Aorta (tissue), 5 donors: ENCODE measurements at regions of chr18 and their contacts with region 1.

Region 1: GRCh38 chr18:37537868-37538525 is 27.6 kb downstream of the CELF4 start:
- DNase-seq: peak; percentile 74 to 92
- ATAC-seq: peak; percentile 81
- H3K4me3 ChIP-seq: no peak overlapping the region
- H3K27ac ChIP-seq: no peak overlapping the region
- H3K4me1 ChIP-seq: no peaks in the 10 kb centered on the region
- H3K27me3 ChIP-seq: no peaks in the 10 kb centered on the region

Region 2: DNA sequence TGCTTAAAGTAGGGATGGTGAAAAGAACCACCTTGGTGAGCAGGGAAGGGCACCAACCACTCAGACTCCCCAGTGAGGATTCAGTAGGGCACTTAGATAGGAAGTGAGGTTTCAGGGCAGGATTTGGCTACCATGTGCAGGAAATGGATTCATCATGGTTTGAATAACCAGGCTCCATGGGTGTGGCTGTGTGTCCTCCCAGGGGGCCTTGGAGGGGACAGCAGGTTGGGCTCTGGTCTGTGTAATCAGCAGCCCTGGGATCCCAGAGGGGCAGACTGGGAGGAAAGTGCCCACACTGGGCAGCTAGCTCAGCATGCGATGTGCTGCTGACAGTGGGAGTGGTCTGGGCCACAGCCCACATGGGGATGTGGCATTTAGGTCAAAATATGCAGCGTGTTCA is 197.0 kb before region 1 on chr18:
- intact Hi-C with region 1: loop called (anchors 5 kb)
- DNase-seq: no peak
- ATAC-seq: no peak
- H3K4me3 ChIP-seq: no peak overlapping the region
- H3K27ac ChIP-seq: no peak overlapping the region
- H3K4me1 ChIP-seq: no peaks in the 10 kb centered on the region
- H3K27me3 ChIP-seq: no peaks in the 10 kb centered on the region

Region 3: DNA sequence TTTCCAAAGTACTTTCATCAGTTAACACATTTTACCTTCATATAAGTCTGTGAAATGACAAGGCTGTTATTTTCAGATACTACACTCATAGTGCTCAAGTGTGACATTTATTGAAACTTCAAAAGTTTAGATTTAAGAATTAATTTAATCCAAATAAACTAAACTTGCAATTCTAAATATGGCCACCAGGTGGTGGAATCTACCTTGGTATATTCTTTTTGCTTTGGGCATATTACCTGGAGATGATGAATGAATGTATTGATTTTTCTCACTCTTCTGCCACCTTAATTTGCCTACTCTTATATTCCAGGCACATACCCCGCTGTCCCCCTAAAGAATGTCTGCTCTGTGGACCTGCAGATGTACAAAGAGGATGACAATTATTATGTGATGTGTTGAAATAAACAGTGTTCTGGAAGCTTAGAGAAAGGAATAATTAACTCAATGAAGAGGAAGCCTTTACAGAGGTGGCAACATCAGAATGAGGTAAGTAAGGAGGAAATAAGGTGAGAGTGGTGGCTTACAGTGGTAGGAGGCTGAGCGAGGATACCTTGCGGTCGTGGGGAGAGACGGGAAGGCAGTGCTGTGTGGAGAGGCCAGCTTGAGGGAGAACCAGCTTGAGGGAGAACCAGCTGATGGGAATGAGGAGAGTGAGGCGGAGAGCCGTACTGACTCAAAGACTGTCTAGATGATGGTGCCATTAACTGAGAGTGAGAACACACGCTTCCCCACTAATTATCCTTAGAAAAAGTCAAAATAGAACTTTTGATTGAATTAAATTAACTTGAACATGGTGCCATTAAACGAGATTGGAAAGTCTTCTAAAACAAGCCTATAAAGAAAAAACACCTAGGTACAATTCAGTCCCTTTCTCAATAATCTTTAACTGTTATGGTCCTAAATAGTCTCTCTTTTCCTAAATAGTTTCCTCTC is 151.9 kb before region 1 on chr18:
- intact Hi-C with region 1: loop called (anchors 1 to 5 kb)
- DNase-seq: no peak
- ATAC-seq: no peak
- H3K4me3 ChIP-seq: no peak overlapping the region
- H3K27ac ChIP-seq: no peak overlapping the region
- H3K4me1 ChIP-seq: no peaks in the 10 kb centered on the region
- H3K27me3 ChIP-seq: no peaks in the 10 kb centered on the region

Region 4: GRCh38 chr18:37445368-37445767 is 92.6 kb before region 1 on chr18:
- intact Hi-C with region 1: loop called in 1 of 2 experiments (anchors 5 kb)
- DNase-seq: no peak
- ATAC-seq: no peak
- H3K4me3 ChIP-seq: no peak overlapping the region
- H3K27ac ChIP-seq: no peak overlapping the region
- H3K4me1 ChIP-seq: no peaks in the 10 kb centered on the region
- H3K27me3 ChIP-seq: no peaks in the 10 kb centered on the region